ENCODE measurements at regions of chr20 and their contacts with region 1.

Region 1: DNA sequence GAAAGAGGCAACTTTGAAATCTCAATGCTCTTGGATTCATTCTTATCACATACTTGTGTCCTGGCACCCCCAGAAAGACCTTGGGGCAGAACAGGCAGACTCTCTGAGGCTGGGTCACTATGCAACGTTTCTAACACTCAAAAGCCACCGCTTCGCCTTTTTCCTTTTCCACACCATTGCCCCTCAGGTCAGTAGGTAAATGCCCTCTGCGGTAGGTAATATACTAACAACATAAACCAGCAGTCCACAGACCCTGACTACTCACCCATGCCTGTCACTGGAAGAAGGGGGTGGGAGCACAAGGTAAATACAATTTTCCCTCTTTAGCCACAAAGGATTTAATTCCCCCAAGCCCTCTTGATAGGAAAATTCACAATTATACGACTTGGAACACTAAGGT is 6.5 kb upstream of the SPTLC3 start:
- DNase-seq: no peak
- H3K4me3 ChIP-seq: no peak overlapping the region
- H3K27ac ChIP-seq: no peak overlapping the region
- H3K4me1 ChIP-seq: no peaks in the 10 kb centered on the region
- H3K27me3 ChIP-seq: no peaks in the 10 kb centered on the region
- CTCF ChIP-seq: no peak
- EP300 ChIP-seq: no peak
- POLR2A ChIP-seq: no peak

Region 2: GRCh38 chr20:12984069-12984765 is 18.0 kb before region 1 on chr20:
- intact Hi-C with region 1: loop called in 1 of 4 experiments (anchors 2 kb)
- DNase-seq: no peak
- H3K4me3 ChIP-seq: no peak overlapping the region
- H3K27ac ChIP-seq: no peak overlapping the region
- H3K4me1 ChIP-seq: no peaks in the 10 kb centered on the region
- H3K27me3 ChIP-seq: no peaks in the 10 kb centered on the region
- CTCF ChIP-seq: no peak
- EP300 ChIP-seq: no peak
- POLR2A ChIP-seq: no peak

Region 3: GRCh38 chr20:13041574-13042457 is 39.6 kb after region 1 on chr20:
- intact Hi-C with region 1: loop called in 1 of 4 experiments (anchors 2 kb)
- DNase-seq: no peak
- H3K4me3 ChIP-seq: no peak overlapping the region
- H3K27ac ChIP-seq: no peak overlapping the region
- H3K4me1 ChIP-seq: no peaks in the 10 kb centered on the region
- H3K27me3 ChIP-seq: no peaks in the 10 kb centered on the region
- CTCF ChIP-seq: no peak
- EP300 ChIP-seq: no peak
- POLR2A ChIP-seq: no peak

Measured in ovary (tissue), 10 donors.